Posterior cingulate gyrus (tissue), 11 donors: ENCODE measurements at regions of chr6 and their contacts with region 1.

Region 1: GRCh38 chr6:159252955-159253508 is 83.8 kb downstream of the FNDC1 start:
- DNase-seq: no peak

Region 2: DNA sequence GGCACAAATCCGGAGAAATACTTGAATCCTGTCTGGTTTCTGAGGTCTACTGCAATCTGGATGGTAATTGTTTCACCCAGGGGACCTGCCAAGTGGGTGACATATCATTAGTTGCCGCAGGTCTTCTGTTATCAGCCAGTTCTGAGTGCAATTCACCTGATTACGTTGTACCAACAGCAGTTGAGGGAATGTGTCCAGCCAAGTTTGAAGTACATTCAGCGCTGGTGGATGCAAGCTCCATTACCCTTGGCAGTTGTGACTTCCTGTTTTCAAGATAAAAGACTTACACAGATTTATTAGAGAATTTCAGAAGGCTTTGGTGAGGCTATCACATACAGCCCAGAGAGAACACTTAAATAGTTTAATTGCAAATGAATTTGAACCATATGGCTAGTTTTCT is 41.0 kb before region 1 on chr6:
- intact Hi-C with region 1: no loop called
- DNase-seq: no peak

Region 3: DNA sequence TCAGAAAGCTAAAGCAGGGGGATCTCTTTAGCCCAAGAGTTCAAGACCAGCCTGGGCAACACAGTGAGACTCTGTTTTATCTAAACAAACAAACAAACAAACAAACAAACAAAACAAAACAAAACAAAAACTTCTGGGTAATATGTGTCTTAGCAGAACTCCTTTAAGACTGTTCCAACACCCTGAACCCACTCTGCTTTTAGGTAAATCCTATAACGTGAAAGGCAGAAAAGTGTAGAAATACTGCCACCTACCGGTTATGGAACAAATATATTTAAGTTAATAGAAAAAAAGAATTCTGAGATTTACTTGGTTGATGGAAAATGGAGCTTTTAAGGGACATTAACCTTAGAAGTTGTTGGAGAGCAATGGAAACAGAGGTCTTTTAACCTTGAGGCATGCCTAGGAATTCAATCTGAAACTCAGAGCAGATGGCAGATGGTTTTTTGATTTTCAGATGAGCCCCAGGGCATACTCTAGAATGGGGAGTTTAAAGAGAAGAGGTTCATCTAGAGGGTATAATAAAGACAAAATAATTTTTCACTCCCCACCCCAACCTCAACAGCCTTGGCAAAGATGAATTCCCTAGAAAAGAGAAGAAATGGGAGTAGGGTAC is 401.6 kb after region 1 on chr6:
- intact Hi-C with region 1: loop called (anchors 2 kb)
- DNase-seq: no peak